Endothelial cell of umbilical vein (primary cell): ENCODE measurements at regions of chr1 and their contacts with region 1.

Region 1: DNA sequence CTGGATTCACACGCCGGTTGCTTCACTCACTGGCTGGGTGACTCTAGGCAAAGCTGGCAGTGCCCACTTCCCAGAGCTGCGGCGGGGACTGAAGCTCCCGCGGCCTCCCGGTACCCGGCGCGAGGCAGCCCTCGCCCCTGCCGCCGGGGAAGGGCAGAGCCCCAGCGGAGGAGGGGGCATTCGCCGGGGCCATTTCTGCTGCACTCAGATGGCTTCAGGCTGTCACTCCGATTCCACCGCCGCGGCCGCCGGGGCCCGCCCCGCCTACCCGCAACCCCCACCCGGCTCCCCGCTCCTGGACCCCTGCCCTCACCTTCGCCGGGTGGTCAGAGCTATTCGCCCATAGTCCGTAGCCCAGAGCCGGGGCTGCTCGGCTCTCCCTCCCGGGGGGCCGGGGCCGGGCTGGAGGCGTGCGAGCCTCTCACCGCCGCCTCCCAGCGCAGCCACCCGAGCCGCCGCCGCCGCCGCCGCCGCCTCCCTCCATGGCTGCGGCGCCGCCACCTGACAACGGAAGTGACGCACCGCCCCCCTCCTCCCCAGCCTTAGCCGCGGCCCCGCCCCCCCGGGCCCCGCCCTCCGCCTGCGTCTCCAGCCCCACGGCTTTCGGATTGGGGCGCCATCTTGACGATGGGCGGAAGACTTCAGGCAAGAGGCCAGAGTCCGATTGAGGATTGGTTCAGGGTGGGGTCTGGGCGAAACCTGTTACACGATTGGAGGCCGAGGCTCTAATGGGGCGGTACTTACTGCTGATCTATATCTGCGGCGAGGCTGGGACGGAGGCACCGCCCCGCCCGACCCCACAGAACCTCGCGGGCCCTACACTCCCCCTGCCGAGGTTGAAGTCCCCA is at the start of gene STK40:
- DNase-seq: peak; percentile 99
- H3K4me3 ChIP-seq: peak within 1 kb of the TSS; percentile 80 to 90 (median 83)
- H3K27ac ChIP-seq: peak within 1 kb of the TSS; percentile 97
- H3K4me1 ChIP-seq: peaks cover 24% of the 10 kb centered on the region
- H3K27me3 ChIP-seq: no peaks in the 10 kb centered on the region
- CTCF ChIP-seq: no peak
- POLR2A ChIP-seq: no peak
- total RNA-seq, gene STK40: 35.2 and 36.8 TPM in 2 replicates

Region 2: GRCh38 chr1:36269408-36269838 is 116.2 kb before region 1 on chr1:
- CTCF ChIA-PET with region 1: no interaction called
- POLR2A ChIA-PET with region 1: no interaction called
- dilution Hi-C with region 1: no loop called
- intact Hi-C with region 1: no loop called
- DNase-seq: no peak
- H3K4me3 ChIP-seq: no peak overlapping the region
- H3K27ac ChIP-seq: no peak overlapping the region
- H3K4me1 ChIP-seq: peaks cover 2% of the 10 kb centered on the region
- H3K27me3 ChIP-seq: no peaks in the 10 kb centered on the region
- CTCF ChIP-seq: no peak
- POLR2A ChIP-seq: no peak

Region 3: GRCh38 chr1:36323597-36324352 is 61.9 kb before region 1 on chr1 and contains the start of gene EVA1B:
- CTCF ChIA-PET with region 1: interaction called, 5 read pairs
- POLR2A ChIA-PET with region 1: no interaction called
- dilution Hi-C with region 1: no loop called
- intact Hi-C with region 1: loop called (anchors 1 kb)
- DNase-seq: peak; percentile 90
- H3K4me3 ChIP-seq: peak within 1 kb of the TSS; percentile 61 to 85 (median 71)
- H3K27ac ChIP-seq: peak within 1 kb of the TSS; percentile 62
- H3K4me1 ChIP-seq: peaks cover 15% of the 10 kb centered on the region
- H3K27me3 ChIP-seq: no peaks in the 10 kb centered on the region
- CTCF ChIP-seq: no peak
- POLR2A ChIP-seq: no peak
- total RNA-seq, gene EVA1B: 63.2 and 64.7 TPM in 2 replicates

Region 4: DNA sequence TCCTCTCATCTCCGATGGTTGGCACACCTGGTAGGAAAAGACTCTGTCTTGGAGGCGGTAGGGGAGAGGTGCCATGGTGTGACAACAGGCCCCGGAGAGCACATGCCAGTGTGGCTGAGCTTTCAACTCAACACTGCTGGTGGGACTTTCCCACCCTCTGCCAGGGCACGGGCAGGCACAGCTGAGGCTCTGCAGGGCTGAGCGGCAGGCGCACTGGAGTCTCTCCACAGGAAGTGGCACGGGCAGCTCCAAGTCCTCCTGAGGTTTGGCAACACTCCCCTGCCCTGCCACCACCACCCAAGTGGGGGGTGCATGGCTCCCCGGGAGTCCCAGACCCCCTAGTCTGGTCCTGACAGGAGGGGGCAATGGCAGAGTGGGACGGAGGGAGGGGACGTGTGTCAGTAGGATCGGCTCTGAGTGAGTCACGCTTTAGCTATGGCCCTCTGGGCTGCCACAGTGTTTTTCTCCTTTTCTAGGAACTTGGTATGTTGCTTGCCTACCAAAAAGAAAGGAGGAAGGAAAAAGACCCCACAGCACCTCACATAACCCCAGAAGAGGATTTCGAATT is 34.9 kb before region 1 on chr1:
- CTCF ChIA-PET with region 1: interaction called, 17 read pairs
- POLR2A ChIA-PET with region 1: interaction called, 9 read pairs
- dilution Hi-C with region 1: no loop called
- intact Hi-C with region 1: loop called (anchors 1 kb)
- DNase-seq: peak; percentile 85
- H3K4me3 ChIP-seq: no peak overlapping the region
- H3K27ac ChIP-seq: peak overlapping the region; percentile 89
- H3K4me1 ChIP-seq: peaks cover 49% of the 10 kb centered on the region
- H3K27me3 ChIP-seq: no peaks in the 10 kb centered on the region
- CTCF ChIP-seq: no peak
- POLR2A ChIP-seq: no peak

Region 5: GRCh38 chr1:36397378-36398230 is 12.0 kb after region 1 on chr1 and contains the start of gene LSM10:
- CTCF ChIA-PET with region 1: interaction called, 19 read pairs
- POLR2A ChIA-PET with region 1: interaction called, 12 read pairs
- dilution Hi-C with region 1: no loop called
- intact Hi-C with region 1: loop called (anchors 1 kb)
- DNase-seq: peak; percentile 96
- H3K4me3 ChIP-seq: peak within 1 kb of the TSS; percentile 63 to 78 (median 69)
- H3K27ac ChIP-seq: peak within 1 kb of the TSS; percentile 61
- H3K4me1 ChIP-seq: peaks cover 3% of the 10 kb centered on the region
- H3K27me3 ChIP-seq: no peaks in the 10 kb centered on the region
- CTCF ChIP-seq: no peak
- POLR2A ChIP-seq: peak; percentile 91
- total RNA-seq, gene LSM10: 38.2 and 40.3 TPM in 2 replicates

Region 6: DNA sequence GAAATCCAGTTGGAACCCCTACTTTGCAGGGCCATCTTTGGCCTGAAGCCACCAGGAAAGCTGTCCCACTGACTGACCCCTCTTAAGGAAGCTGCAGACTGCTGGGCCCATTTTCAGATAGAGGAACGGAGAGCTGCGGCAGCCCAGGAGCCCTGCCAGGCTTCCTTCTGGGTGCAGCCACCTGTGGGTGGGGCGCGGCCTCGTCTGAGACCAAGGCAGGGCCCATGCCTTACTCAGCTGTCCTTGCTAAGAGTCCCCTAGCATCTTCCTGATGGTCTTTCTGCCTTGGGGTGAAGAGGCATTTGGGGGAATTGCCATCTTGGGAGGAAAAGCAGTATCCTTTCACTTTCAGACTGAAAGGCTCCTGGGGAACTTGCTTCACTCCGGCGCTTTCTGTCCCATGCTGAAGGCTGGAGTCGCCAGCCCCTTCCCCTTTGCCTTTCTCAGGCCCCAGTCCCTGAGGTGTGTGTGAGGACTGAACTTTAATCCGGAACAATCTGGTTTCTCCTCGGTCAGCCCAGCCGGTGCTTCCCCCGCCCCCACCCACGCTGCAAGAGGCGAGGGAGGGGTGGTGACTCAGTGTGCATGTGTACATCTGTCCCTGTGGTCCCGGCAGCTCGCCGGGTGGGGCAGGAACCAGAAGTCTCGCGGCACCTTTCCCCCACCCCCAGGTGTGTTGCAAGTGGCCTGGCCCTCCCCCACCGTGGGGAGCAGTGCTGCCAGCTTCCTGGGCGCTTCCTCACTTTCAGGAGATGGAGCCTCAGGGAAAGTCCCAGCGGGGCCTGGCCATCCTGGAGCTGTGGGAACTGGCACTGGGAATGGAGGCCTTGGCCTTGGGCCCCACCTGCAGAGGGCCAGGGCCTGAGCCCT is 1093.9 kb after region 1 on chr1:
- CTCF ChIA-PET with region 1: no interaction called
- POLR2A ChIA-PET with region 1: no interaction called
- dilution Hi-C with region 1: no loop called
- intact Hi-C with region 1: loop called (anchors 5 kb)
- DNase-seq: peak; percentile 76
- H3K4me3 ChIP-seq: peak overlapping the region in 2 of 3 experiments; percentile 3 to 54
- H3K27ac ChIP-seq: peak overlapping the region; percentile 82
- H3K4me1 ChIP-seq: peaks cover 54% of the 10 kb centered on the region
- H3K27me3 ChIP-seq: no peaks in the 10 kb centered on the region
- CTCF ChIP-seq: no peak
- POLR2A ChIP-seq: no peak